Adrenal gland (tissue), 19 donors: ENCODE measurements at regions of chr16 and their contacts with region 1.

Region 1: DNA sequence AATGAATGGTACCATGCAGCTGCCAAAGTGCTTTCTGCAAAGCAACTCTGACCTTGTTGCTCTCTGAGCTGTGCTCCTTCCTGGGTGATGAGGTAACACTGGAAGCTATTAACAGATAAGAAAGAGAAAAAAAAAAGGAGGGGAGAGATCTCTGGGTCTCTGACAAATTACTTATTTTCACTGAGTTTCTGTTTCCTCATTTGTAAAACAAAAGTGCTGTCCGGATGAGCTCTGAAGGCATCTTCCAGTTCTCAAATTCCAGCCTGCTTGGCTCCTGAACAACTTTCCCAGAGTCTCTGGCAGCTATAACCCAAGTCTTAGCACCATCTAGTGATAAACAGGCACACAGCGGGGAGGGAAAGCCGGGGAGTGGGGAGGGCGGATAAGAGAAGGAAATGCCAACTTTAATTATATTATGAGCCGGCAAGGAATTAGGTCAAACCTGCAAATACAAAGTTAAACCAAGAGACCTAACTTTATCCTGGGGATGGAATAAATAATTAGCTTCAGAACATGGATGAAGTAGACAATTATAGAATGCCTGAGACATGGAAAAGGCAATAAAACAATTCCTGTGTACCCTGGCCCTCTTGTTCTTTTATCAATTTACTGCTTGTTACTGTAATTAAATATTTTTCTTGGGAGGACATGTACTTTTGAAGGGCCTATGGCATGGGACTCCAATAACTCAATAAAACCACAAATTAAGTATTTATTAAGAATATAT is 61.3 kb upstream of the KIFC3 start:
- DNase-seq: peak; percentile 59 to 89 (median 80)
- H3K4me3 ChIP-seq: no peak overlapping the region
- H3K27ac ChIP-seq: no peak overlapping the region
- H3K4me1 ChIP-seq: peaks cover 0 to 13% of the 10 kb centered on the region in 2 donors
- H3K27me3 ChIP-seq: no peaks in the 10 kb centered on the region
- CTCF ChIP-seq: peak; percentile 22 to 78 (median 56)
- POLR2A ChIP-seq: no peak

Region 2: DNA sequence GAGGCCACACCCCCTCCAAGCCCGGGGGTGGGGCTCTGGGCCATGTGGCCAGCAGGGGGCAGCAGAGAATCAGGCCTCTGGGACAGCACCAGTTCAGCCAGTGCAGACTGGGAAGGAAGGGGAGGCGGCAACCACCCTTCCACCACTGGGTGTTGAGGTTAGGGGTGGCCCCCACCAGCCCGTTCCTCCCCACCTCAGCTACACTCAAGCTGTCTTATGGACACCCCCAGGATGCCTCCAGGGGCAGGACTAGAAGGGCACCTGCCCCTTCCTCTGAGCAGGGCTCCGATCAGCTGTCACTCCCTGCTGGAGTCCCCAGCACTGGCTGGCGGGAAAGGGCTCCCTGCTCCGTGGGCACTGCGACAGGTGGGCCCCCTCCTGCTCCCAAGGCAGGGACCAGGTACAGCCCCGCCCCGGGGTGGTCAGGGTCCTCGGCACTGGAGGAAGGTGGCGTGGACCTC is 106.2 kb before region 1 on chr16:
- intact Hi-C with region 1: loop called (anchors 2 to 5 kb)
- DNase-seq: peak; percentile 81 to 94 (median 90)
- H3K4me3 ChIP-seq: no peak overlapping the region
- H3K27ac ChIP-seq: peak overlapping the region in 1 of 5 donors; percentile 45
- H3K4me1 ChIP-seq: peaks cover 0 to 3% of the 10 kb centered on the region in 2 donors
- H3K27me3 ChIP-seq: no peaks in the 10 kb centered on the region
- CTCF ChIP-seq: peak; percentile 90 to 98 (median 96)
- POLR2A ChIP-seq: no peak

Region 3: DNA sequence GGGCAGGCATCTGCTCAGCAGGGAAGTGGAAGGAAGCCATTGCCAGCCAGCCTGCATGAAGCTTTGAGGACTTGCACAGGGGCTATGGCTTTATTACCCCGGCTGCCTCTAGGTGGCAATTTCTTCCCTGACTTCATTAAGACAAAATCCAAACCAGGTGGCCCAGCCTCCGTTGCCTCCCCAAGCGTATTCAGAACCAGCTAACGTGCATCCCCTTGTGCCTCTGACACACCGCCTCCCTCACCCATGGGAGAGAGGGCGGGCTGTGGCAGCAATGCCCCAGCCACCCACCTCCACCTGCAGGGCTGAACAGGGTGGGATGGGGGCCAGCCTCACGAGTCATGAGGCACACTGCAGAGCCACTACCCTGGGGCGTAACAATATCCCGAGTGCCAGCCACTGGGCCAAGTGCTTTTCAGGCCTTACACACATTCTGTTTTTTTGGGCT is 68.1 kb before region 1 on chr16:
- intact Hi-C with region 1: loop called in 1 of 2 experiments (anchors 10 kb)
- DNase-seq: peak in 5 of 7 donors; percentile 50 to 79 (median 54)
- H3K4me3 ChIP-seq: no peak overlapping the region
- H3K27ac ChIP-seq: no peak overlapping the region
- H3K4me1 ChIP-seq: peaks cover 17 to 40% of the 10 kb centered on the region in 2 donors
- H3K27me3 ChIP-seq: no peaks in the 10 kb centered on the region
- CTCF ChIP-seq: peak in 5 of 6 experiments; percentile 8 to 46 (median 38)
- POLR2A ChIP-seq: no peak